Right ventricle myocardium inferior (tissue), 1 donor: ENCODE measurements at regions of chr2 and their contacts with region 1.

Region 1: DNA sequence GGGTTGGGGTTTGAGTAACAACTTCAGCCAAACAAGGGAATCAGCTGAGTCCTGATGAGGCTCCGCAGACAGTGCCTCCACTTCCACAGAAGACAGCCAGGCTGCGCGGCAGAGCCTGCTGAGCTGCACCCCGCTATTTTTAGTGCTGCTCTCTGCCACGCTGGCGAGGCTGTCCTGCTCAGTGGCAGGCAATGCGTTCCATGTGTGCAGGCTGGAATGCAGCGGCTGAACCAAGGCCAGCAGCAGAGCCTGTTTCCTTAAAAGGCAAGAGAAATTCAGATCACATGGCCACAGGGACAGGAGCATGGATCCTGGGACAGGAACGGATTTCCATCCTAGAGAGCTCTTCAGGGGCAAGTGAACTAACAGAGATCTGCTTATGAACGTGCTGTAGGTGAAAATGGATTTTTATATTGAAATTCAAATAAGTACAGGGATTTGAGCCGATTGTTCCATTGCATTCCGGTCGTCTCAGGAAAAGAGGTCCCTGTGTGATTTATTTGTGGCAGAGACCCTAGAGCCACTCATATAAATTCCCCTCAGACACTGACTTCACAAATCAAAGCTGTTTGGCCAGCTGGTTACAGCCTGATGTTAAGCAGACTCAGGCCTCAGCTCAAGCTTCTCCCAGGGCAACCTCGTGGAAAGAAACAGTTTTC is 98.7 kb downstream of the COL6A3 start:
- DNase-seq: peak; percentile 92
- ATAC-seq: peak; percentile 94

Region 2: GRCh38 chr2:237207646-237208045 is 107.7 kb before region 1 on chr2:
- intact Hi-C with region 1: loop called (anchors 5 kb)
- DNase-seq: peak; percentile 91
- ATAC-seq: peak; percentile 90

Region 3: DNA sequence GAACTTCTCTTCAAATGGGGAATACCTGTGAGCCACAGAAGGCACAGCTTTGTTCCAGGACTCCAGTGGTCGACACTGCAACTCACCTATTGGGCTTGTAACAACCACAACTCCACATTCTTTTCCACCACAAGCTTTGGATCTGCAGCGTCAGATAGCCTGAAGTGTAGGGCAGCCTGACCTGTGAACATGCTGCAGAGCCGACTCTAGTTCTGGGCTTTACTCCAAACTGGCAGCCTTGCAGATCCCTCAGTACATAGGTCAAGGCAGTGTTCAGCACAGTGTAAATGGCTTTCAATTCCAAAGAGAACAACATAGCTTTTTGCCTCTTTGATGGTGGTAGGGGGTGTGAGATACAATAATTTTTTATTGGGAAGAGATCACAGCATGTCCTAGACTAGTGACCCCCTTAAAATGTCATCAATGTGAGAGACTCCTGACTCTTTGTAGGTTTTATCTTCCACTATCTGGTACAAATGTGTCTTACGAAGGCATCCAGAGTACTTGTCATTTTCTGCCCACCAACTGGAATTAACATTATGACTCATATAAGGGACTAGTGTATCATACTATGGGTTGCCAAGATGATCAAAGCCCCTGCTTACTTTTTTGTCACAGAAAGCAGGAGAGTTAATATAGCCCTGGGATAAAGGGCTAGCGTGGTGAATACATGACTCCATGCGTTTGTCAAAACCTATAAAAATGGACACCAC is 79.8 kb before region 1 on chr2:
- intact Hi-C with region 1: loop called (anchors 1 kb)
- DNase-seq: peak; percentile 77
- ATAC-seq: peak; percentile 94

Region 4: GRCh38 chr2:237291138-237291792 is 24.0 kb before region 1 on chr2:
- intact Hi-C with region 1: loop called (anchors 2 kb)
- DNase-seq: peak; percentile 97
- ATAC-seq: peak; percentile 95

Region 5: DNA sequence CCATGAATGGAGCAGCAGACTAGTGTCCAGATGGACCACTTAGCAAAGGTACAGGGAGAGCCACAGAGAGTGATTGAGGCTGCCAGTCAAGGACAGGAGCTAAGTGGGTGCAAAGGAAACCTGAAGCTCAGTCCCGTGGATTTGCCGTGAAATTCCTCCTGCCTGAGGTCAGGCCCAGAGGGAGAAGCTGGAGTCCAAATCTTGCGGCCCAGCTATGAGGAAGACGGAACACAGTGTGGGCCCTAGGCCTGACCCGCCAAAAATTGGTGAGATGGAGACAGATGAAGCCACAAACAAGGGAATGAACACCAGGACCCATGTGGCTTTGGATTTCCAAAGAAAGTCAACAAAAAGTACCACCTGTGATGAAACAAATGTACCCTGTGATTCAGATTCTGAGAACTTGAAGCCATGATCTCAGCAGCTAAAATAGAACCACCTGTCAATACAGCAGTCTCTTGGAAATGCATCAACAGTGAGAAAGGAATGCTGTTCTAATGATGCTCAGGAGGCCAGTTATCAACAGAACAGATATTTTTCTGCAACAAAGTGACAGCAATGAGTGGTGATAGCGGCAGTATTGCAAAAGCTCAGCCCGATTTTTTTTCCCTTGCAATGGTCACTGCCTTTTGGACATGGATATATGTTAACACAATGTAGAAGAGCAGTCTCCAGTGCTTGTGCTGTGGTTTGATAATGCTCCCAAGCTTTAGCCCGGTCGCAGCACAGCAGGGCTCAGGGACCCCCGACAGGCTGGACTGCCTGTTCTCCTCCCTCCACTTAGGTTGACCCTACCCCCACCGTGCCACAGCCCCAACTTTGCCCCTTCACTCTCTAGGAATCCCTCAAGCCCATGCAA is 88.0 kb after region 1 on chr2:
- intact Hi-C with region 1: no loop called
- DNase-seq: no peak
- ATAC-seq: peak; percentile 77